Activated naive CD4-positive, alpha-beta T cell treated with anti-CD3 and anti-CD28 coated beads, Interleukin-2, amount 10 ng/mL, durations not matched to agents 7 days and 5 days (primary cell): ENCODE measurements at regions of chr5 and their contacts with region 1.

Region 1: GRCh38 chr5:141664732-141665461 is 13.7 kb upstream of the FCHSD1 start:
- DNase-seq: peak; percentile 84
- H3K4me3 Mint-ChIP-seq: no peak overlapping the region
- H3K27ac Mint-ChIP-seq: no peak overlapping the region
- H3K4me1 Mint-ChIP-seq: peaks cover 5% of the 10 kb centered on the region
- H3K27me3 Mint-ChIP-seq: peaks cover 19% of the 10 kb centered on the region

Region 2: DNA sequence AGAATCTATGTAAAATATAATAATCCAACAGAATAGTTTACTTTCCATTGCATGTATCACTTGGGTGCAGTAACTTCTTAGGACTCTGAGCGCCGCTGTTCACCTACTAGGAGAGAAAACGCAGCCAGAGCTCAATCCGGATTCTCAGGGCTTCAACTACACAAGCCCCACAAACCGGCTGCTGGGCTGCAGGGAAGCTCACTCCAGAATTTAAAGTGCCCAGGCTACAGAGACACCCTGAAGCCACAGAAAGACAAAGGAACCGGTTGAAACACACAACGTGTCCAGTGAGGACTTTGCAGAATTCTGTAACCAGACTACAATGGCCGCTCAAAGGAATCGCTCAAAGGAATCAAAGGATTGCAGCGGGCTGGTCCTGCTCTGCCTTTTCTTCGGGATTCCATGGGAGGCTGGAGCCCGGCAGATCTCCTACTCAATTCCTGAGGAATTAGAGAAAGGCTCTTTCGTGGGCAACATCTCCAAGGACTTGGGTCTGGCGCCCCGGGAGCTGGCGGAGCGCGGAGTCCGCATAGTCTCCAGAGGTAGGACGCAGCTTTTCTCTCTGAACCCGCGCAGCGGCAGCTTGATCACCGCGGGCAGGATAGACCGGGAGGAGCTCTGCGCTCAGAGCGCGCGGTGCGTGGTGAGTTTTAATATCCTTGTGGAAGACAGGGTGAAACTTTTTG is 251.9 kb before region 1 on chr5 and contains the start of gene PCDHGA10:
- CTCF ChIA-PET with region 1: no interaction called
- DNase-seq: peak; percentile 72
- H3K4me3 Mint-ChIP-seq: peak within 1 kb of the TSS; percentile 78
- H3K27ac Mint-ChIP-seq: peak within 1 kb of the TSS; percentile 74
- H3K4me1 Mint-ChIP-seq: peaks cover 21% of the 10 kb centered on the region
- H3K27me3 Mint-ChIP-seq: peaks cover 79% of the 10 kb centered on the region

Region 3: GRCh38 chr5:141681695-141682641 is 17.1 kb after region 1 on chr5 and contains the start of gene ARAP3:
- CTCF ChIA-PET with region 1: interaction called, 18 read pairs
- DNase-seq: peak; percentile 63
- H3K4me3 Mint-ChIP-seq: peak within 1 kb of the TSS; percentile 72
- H3K27ac Mint-ChIP-seq: peak within 1 kb of the TSS; percentile 58
- H3K4me1 Mint-ChIP-seq: peaks cover 42% of the 10 kb centered on the region
- H3K27me3 Mint-ChIP-seq: peaks cover 40% of the 10 kb centered on the region

Region 4: GRCh38 chr5:141701360-141702119 is 36.6 kb after region 1 on chr5:
- CTCF ChIA-PET with region 1: interaction called, 11 read pairs
- DNase-seq: no peak
- H3K4me3 Mint-ChIP-seq: peak overlapping the region; percentile 70
- H3K27ac Mint-ChIP-seq: no peak overlapping the region
- H3K4me1 Mint-ChIP-seq: peaks cover 22% of the 10 kb centered on the region
- H3K27me3 Mint-ChIP-seq: peaks cover 40% of the 10 kb centered on the region

Region 5: DNA sequence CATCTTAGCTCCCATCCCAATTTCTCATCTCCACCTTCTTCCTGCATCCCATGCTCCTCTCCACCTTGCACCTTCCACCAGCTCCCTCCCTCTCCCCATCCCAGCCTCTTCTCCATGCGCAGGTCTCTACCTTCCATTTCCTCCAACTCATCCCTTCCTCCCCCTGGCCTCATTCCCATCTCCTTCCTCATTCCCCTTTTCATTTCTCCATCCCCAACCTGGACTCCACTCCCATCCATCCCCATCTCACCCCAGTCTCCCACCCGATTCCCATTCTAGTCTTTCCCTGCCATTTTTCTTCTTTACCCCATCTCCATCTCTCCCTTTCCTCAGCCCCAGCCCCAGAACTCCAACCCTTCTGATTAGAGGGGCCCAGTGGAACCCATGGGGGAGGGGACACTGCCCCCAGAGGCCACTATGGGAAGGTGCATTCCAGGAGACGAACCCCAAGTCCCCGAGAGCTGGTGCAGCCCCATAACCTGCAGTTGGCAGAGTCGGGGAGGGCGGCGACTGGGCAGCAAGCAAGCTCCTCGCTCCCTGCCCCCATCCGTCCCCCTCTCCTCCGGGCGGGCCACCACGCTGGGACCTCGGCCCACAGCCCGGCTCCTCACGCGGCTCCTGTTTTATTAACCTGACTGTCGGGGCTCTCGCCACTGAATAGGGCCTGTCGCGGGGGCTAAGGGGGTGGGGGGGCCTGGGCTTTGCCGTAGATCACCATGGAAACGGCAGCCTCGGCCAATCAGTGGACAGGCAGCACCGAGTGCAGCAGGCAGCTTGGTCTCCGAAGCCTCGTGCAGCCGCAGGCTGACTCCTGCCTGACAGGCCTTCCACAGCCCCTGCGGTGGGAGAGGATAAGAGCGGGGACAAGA is 146.6 kb after region 1 on chr5:
- CTCF ChIA-PET with region 1: interaction called, 11 read pairs
- DNase-seq: peak; percentile 45
- H3K4me3 Mint-ChIP-seq: no peak overlapping the region
- H3K27ac Mint-ChIP-seq: no peak overlapping the region
- H3K4me1 Mint-ChIP-seq: no peaks in the 10 kb centered on the region
- H3K27me3 Mint-ChIP-seq: peaks cover 89% of the 10 kb centered on the region